ENCODE measurements at regions of chr20 and their contacts with region 1.

Region 1: GRCh38 chr20:34579191-34579978 is 20.9 kb downstream of the MAP1LC3A start:
- DNase-seq: peak; percentile 61 to 78
- ATAC-seq: peak; percentile 94 to 98
- H3K4me3 ChIP-seq: no peak overlapping the region
- H3K27ac ChIP-seq: peak overlapping the region; percentile 60 to 76 (median 64)
- H3K4me1 ChIP-seq: peaks cover 24 to 35% of the 10 kb centered on the region in 2 donors
- H3K27me3 ChIP-seq: no peaks in the 10 kb centered on the region
- CTCF ChIP-seq: peak; percentile 43 to 74 (median 67)
- POLR2A ChIP-seq: no peak

Region 2: DNA sequence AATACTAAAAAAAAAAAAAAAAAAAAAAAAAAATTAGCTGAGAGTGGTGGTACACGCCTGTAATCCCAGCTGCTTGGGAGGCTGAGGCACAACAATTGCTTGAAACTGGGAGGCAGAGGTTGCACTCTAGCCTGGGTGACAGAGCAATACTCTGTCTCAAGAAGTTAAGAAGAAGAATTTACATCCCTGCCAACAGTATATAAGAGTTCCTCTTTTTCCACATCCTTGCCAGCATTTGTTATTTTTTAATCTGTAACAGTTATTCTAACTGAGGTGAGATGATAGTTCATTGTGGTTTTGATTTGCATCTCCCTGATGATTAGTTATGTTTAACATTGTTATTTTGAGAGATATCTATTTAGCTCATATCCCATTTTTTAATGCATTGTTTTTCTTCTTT is 83.5 kb before region 1 on chr20:
- in situ Hi-C with region 1: no loop called
- intact Hi-C with region 1: no loop called
- DNase-seq: no peak
- ATAC-seq: no peak
- H3K4me3 ChIP-seq: no peak overlapping the region
- H3K27ac ChIP-seq: no peak overlapping the region
- H3K4me1 ChIP-seq: peaks cover 0 to 11% of the 10 kb centered on the region in 2 donors
- H3K27me3 ChIP-seq: no peaks in the 10 kb centered on the region
- CTCF ChIP-seq: no peak
- POLR2A ChIP-seq: no peak

Region 3: DNA sequence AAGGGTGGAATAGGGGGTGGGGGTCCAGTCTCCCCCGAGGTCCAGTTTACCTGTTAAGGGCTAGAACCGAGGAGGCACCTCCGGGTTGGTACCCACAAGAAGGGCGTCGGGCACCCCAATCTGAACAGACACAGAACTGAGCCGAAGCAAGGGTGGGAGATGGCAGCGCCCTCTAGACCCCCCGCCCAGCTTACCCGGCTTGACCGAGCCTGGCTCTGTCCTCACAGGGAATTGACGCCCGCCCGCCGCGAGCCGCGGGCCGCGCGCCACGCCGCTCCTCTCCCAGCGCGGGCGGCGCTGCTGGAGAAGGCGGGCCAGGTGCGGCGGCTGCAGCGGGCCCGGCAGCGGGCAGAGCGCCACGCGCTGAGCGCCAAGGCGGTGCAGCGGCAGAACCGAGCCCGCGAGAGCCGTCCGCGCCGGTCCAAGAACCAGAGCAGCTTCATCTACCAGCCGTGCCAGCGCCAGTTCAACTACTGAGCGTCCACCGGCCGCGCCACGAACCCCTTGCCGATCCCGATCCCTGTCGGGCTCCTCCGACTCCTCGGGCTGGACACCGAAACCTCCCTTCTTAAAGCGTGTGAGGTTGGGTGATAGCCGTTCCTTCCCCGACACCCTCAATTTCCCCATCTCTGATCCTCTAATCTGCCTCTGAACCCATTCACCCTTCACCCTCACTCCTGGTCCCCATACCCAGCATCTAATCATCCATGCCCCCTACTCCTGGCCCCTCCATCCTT is 130.6 kb after region 1 on chr20:
- in situ Hi-C with region 1: no loop called
- intact Hi-C with region 1: loop called (anchors 1 kb)
- DNase-seq: peak; percentile 44 to 80
- ATAC-seq: peak; percentile 51 to 64
- H3K4me3 ChIP-seq: peak overlapping the region; percentile 52 to 75 (median 72)
- H3K27ac ChIP-seq: peak overlapping the region; percentile 94 to 100 (median 95)
- H3K4me1 ChIP-seq: peaks cover 37 to 50% of the 10 kb centered on the region in 2 donors
- H3K27me3 ChIP-seq: no peaks in the 10 kb centered on the region
- CTCF ChIP-seq: peak in 2 of 5 experiments; percentile 15 to 26
- POLR2A ChIP-seq: no peak

Region 4: GRCh38 chr20:34753706-34754461 is 174.5 kb after region 1 on chr20:
- in situ Hi-C with region 1: loop called in 3 of 4 experiments (anchors 25 kb)
- intact Hi-C with region 1: no loop called
- DNase-seq: no peak
- ATAC-seq: no peak
- H3K4me3 ChIP-seq: no peak overlapping the region
- H3K27ac ChIP-seq: no peak overlapping the region
- H3K4me1 ChIP-seq: no peaks in the 10 kb centered on the region
- H3K27me3 ChIP-seq: no peaks in the 10 kb centered on the region
- CTCF ChIP-seq: peak in 1 of 5 experiments; percentile 25
- POLR2A ChIP-seq: no peak

Region 5: GRCh38 chr20:34768096-34768495 is 188.7 kb after region 1 on chr20:
- in situ Hi-C with region 1: loop called (anchors 10 to 25 kb)
- intact Hi-C with region 1: loop called (anchors 1 kb)
- DNase-seq: no peak
- ATAC-seq: no peak
- H3K4me3 ChIP-seq: no peak overlapping the region
- H3K27ac ChIP-seq: no peak overlapping the region
- H3K4me1 ChIP-seq: peaks cover 8 to 9% of the 10 kb centered on the region in 2 donors
- H3K27me3 ChIP-seq: no peaks in the 10 kb centered on the region
- CTCF ChIP-seq: no peak
- POLR2A ChIP-seq: no peak